Right ventricle myocardium superior (tissue), 1 donor: ENCODE measurements at regions of chr3 and their contacts with region 1.

Region 1: GRCh38 chr3:150727653-150728502 is 24.2 kb upstream of the ERICH6 start:
- DNase-seq: peak; percentile 60
- ATAC-seq: peak; percentile 82

Region 2: DNA sequence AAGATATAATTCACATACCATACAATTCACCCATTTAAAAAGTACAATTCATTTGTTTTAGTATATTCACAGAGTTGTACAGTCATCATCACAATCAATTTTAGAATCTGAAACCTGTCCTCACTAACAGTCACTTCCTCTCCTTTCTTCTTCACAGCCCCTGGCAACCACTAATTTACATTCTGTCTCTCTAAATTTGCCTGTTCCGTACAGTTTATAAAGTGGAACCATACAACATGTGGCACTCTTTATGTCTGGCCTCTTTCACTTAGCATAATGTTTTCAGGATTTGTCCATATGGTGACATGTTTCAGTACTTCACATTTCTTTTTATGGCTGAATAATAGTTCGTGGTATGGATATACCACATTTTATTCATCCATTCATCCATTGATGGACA is 46.8 kb before region 1 on chr3:
- intact Hi-C with region 1: no loop called
- DNase-seq: no peak
- ATAC-seq: no peak

Region 3: GRCh38 chr3:150763122-150763841 is 35.4 kb after region 1 on chr3 and contains the start of gene SIAH2:
- intact Hi-C with region 1: loop called (anchors 5 kb)
- DNase-seq: peak; percentile 95
- ATAC-seq: peak; percentile 94
- total RNA-seq, gene SIAH2: 18.2 TPM